Activated CD8-positive, alpha-beta T cell treated with anti-CD3 and anti-CD28 coated beads, Interleukin-2, amount 10 ng/mL, durations not matched to agents 7 days and 5 days (primary cell): ENCODE measurements at regions of chr2 and their contacts with region 1.

Region 1: GRCh38 chr2:127479219-127479825 is 47.0 kb downstream of the IWS1 start:
- DNase-seq: no peak
- ATAC-seq: peak; percentile 58
- H3K4me3 Mint-ChIP-seq: no peak overlapping the region
- H3K27ac Mint-ChIP-seq: no peak overlapping the region
- H3K4me1 Mint-ChIP-seq: no peaks in the 10 kb centered on the region
- H3K27me3 Mint-ChIP-seq: no peaks in the 10 kb centered on the region

Region 2: DNA sequence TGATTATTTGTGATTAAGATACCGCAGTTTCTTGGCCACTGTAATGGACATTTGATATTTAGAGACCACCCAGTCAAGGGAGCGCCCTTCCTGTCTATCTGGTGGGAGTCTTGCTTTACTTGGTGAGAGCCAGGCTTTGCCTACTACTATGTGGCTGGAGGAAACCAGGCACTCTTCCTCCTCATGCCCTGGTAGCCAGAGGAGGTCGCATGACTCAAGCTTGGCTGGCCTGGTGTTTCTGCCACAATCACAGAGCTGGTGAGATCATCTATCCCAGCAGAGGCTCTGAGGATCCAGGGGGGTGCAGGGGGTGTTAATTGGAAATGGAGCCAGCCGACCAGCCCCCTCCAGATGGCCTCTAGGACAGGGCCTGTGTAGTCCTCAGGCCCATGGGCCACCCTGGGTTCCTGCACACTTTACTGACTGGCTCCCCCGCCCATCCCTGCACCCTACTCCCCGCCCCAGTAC is 325.6 kb before region 1 on chr2:
- CTCF ChIA-PET with region 1: no interaction called
- POLR2A ChIA-PET with region 1: no interaction called
- DNase-seq: no peak
- ATAC-seq: no peak
- H3K4me3 Mint-ChIP-seq: no peak overlapping the region
- H3K27ac Mint-ChIP-seq: no peak overlapping the region
- H3K4me1 Mint-ChIP-seq: no peaks in the 10 kb centered on the region
- H3K27me3 Mint-ChIP-seq: no peaks in the 10 kb centered on the region

Region 3: GRCh38 chr2:127197475-127198385 is 281.6 kb before region 1 on chr2:
- CTCF ChIA-PET with region 1: interaction called, 27 read pairs
- POLR2A ChIA-PET with region 1: no interaction called
- DNase-seq: peak; percentile 72
- ATAC-seq: peak; percentile 95
- H3K4me3 Mint-ChIP-seq: peak overlapping the region; percentile 67
- H3K27ac Mint-ChIP-seq: no peak overlapping the region
- H3K4me1 Mint-ChIP-seq: peaks cover 4% of the 10 kb centered on the region
- H3K27me3 Mint-ChIP-seq: no peaks in the 10 kb centered on the region

Region 4: DNA sequence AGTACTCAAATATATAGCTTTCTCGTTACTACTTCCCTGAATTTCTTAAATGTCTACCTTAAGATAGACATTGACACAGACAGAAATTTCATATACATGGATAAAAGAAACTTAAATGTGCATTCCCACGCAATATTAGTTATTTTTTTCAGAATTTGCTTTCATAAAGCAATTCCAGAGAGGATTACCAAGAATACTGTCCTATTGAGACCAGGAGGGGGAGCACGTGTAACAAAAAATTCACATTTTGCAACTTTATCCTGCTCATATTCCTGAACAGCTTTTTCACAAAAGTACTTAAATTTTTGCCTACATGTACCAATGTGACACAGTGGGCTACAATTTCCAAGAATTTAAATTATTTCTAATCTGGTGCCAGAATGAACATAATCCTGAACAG is 154.7 kb before region 1 on chr2:
- CTCF ChIA-PET with region 1: interaction called, 12 read pairs
- POLR2A ChIA-PET with region 1: no interaction called
- DNase-seq: no peak
- ATAC-seq: no peak
- H3K4me3 Mint-ChIP-seq: no peak overlapping the region
- H3K27ac Mint-ChIP-seq: no peak overlapping the region
- H3K4me1 Mint-ChIP-seq: no peaks in the 10 kb centered on the region
- H3K27me3 Mint-ChIP-seq: no peaks in the 10 kb centered on the region

Region 5: GRCh38 chr2:127469051-127469450 is 10.3 kb before region 1 on chr2:
- CTCF ChIA-PET with region 1: interaction called, 18 read pairs
- POLR2A ChIA-PET with region 1: no interaction called
- DNase-seq: no peak
- ATAC-seq: no peak
- H3K4me3 Mint-ChIP-seq: no peak overlapping the region
- H3K27ac Mint-ChIP-seq: no peak overlapping the region
- H3K4me1 Mint-ChIP-seq: peaks cover 10% of the 10 kb centered on the region
- H3K27me3 Mint-ChIP-seq: no peaks in the 10 kb centered on the region

Region 6: DNA sequence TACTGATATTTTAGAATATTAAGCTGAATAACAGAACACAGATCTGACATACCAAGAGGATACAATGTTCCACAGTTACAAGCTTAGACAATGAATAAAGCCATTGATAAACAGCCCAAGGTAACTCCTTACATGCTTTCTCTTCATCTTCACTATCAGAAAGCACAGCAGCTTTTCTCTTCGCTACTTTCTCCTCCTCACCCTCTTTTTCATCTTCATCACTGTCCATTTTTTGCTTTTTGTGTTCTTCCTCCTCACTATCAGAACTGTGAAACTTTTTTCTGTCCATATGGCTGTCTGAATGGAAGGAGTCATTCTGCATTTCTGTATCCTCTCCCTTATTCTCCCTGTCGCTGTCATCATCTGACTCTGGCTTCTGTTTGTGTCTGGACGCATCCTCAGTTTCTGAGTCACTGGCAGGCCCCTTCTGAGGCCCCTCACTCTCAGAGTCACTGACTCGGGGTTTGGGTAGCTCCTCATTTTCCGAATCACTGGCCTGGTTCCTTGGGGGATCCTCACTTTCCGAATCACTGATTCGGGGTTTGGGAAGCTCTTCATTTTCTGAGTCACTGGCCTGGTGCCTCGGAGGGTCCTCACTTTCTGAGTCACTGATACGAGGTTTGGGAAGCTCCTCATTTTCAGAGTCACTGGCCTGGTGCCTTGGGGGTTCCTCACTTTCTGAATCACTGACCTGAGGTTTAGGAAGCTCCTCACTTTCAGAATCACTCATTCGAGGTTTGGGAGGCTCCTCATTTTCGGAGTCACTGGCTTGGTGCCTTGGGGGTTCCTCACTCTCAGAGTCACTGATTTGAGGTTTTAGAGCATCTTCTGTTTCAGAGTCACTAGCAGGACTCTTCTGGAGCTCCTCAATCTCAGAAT is 25.5 kb after region 1 on chr2:
- CTCF ChIA-PET with region 1: interaction called, 15 read pairs
- POLR2A ChIA-PET with region 1: no interaction called
- DNase-seq: no peak
- ATAC-seq: no peak
- H3K4me3 Mint-ChIP-seq: no peak overlapping the region
- H3K27ac Mint-ChIP-seq: no peak overlapping the region
- H3K4me1 Mint-ChIP-seq: peaks cover 10% of the 10 kb centered on the region
- H3K27me3 Mint-ChIP-seq: no peaks in the 10 kb centered on the region